Naive thymus-derived CD8-positive, alpha-beta T cell (primary cell): ENCODE measurements at regions of chr14 and their contacts with region 1.

Region 1: GRCh38 chr14:70600382-70601157 is at the start of gene MED6:
- DNase-seq: peak; percentile 81 to 96 (median 90)
- ATAC-seq: peak; percentile 97 to 98
- H3K4me3 Mint-ChIP-seq: peak within 1 kb of the TSS; percentile 98 to 100 (median 99)
- H3K27ac Mint-ChIP-seq: peak within 1 kb of the TSS; percentile 96 to 99 (median 99)
- H3K4me1 Mint-ChIP-seq: peaks cover 15 to 35% (median 28%) of the 10 kb centered on the region in 4 donors
- H3K27me3 Mint-ChIP-seq: peaks cover 0 to 3% (median 0%) of the 10 kb centered on the region in 5 donors
- polyA plus RNA-seq, gene MED6: 27.4 to 36.0 (median 32.7) TPM

Region 2: GRCh38 chr14:70576891-70577290 is 23.7 kb before region 1 on chr14:
- POLR2A ChIA-PET with region 1: no interaction called
- DNase-seq: no peak
- ATAC-seq: no peak
- H3K4me3 Mint-ChIP-seq: no peak overlapping the region
- H3K27ac Mint-ChIP-seq: peak overlapping the region in 2 of 10 donors; percentile 61
- H3K4me1 Mint-ChIP-seq: peaks cover 0 to 13% (median 5%) of the 10 kb centered on the region in 4 donors
- H3K27me3 Mint-ChIP-seq: no peaks in the 10 kb centered on the region

Region 3: GRCh38 chr14:70640938-70641547 is 40.5 kb after region 1 on chr14:
- POLR2A ChIA-PET with region 1: interaction called, 13 read pairs
- DNase-seq: peak in 9 of 10 donors; percentile 29 to 86 (median 56)
- ATAC-seq: peak; percentile 67 to 76
- H3K4me3 Mint-ChIP-seq: peak overlapping the region; percentile 96 to 99 (median 98)
- H3K27ac Mint-ChIP-seq: peak overlapping the region; percentile 86 to 98 (median 96)
- H3K4me1 Mint-ChIP-seq: peaks cover 21 to 68% (median 52%) of the 10 kb centered on the region in 4 donors
- H3K27me3 Mint-ChIP-seq: peaks cover 0 to 3% (median 0%) of the 10 kb centered on the region in 5 donors